ENCODE measurements at regions of chr1 and their contacts with region 1.

Region 1: GRCh38 chr1:226798427-226799411 is 59.6 kb upstream of the ITPKB start:
- DNase-seq: peak; percentile 64 to 76 (median 68)
- H3K4me3 ChIP-seq: peak overlapping the region in 1 of 2 donors; percentile 5
- H3K4me3 Mint-ChIP-seq: peak overlapping the region; percentile 27 to 90 (median 80)
- H3K27ac ChIP-seq: peak overlapping the region; percentile 80
- H3K27ac Mint-ChIP-seq: peak overlapping the region; percentile 97 to 100 (median 99)
- H3K4me1 ChIP-seq: peaks cover 38% of the 10 kb centered on the region
- H3K4me1 Mint-ChIP-seq: peaks cover 26 to 45% (median 34%) of the 10 kb centered on the region in 4 donors
- H3K27me3 ChIP-seq: no peaks in the 10 kb centered on the region
- H3K27me3 Mint-ChIP-seq: no peaks in the 10 kb centered on the region

Region 2: GRCh38 chr1:226814751-226815496 is 16.2 kb after region 1 on chr1:
- CTCF ChIA-PET with region 1: interaction called, 3 read pairs
- POLR2A ChIA-PET with region 1: interaction called, 13 read pairs
- intact Hi-C with region 1: no loop called
- DNase-seq: peak in 1 of 5 donors; percentile 9
- H3K4me3 ChIP-seq: no peak overlapping the region
- H3K4me3 Mint-ChIP-seq: peak overlapping the region in 1 of 8 donors; percentile 17
- H3K27ac ChIP-seq: no peak overlapping the region
- H3K27ac Mint-ChIP-seq: peak overlapping the region in 3 of 7 donors; percentile 10 to 53 (median 29)
- H3K4me1 ChIP-seq: peaks cover 11% of the 10 kb centered on the region
- H3K4me1 Mint-ChIP-seq: peaks cover 7 to 23% (median 12%) of the 10 kb centered on the region in 4 donors
- H3K27me3 ChIP-seq: no peaks in the 10 kb centered on the region
- H3K27me3 Mint-ChIP-seq: no peaks in the 10 kb centered on the region